Heart right ventricle (tissue), 16 donors: ENCODE measurements at regions of chr1 and their contacts with region 1.

Region 1: DNA sequence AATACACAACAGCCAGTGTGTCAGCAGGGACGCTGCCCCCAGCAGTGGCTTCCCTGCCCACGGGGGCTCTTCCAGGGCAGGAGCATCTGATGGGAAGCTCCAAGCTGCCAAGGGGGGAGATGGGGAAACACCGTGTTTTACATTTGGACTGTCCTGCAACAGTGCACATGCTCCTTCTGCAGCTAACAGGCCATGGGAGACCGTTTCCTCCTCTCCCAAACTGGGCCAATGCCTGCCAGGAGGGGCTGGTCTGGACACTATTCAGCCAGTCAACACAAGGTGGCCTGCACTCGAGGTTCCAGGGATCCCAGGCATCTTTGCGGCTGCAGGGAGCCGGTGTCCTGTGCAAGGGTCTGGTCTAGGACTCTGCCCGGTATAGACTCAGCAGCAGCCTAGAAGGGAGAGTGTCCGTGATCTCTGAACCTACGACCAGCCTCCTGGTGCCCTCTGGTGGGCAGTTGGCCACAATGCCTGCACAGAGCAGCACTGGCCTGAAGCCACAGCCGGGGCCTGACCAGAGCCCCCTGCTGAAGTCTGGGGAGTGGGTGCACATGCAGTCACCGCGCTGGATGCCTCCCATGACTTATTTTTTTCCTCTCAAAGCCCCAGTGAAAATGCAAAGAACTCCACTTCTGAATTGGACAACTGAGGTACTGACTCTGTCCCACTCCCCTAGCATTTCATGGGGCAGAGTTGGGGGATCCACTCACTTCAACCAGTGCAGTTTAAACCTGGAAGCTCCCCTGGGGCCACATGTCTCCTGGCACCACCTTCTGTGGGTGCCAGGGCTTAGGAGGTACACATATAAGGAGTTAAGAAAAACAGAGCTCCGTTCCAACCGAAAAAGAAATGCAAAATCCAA is 33.3 kb downstream of the RCC2 start:
- DNase-seq: peak; percentile 39 to 50
- ATAC-seq: peak in 7 of 8 donors; percentile 82 to 90 (median 87)
- H3K4me3 ChIP-seq: no peak overlapping the region
- H3K27ac ChIP-seq: no peak overlapping the region
- H3K4me1 ChIP-seq: peaks cover 0 to 10% (median 0%) of the 10 kb centered on the region in 9 donors
- H3K27me3 ChIP-seq: peaks cover 0 to 5% (median 0%) of the 10 kb centered on the region in 7 donors
- CTCF ChIP-seq: peak; percentile 46 to 81 (median 72)

Region 2: DNA sequence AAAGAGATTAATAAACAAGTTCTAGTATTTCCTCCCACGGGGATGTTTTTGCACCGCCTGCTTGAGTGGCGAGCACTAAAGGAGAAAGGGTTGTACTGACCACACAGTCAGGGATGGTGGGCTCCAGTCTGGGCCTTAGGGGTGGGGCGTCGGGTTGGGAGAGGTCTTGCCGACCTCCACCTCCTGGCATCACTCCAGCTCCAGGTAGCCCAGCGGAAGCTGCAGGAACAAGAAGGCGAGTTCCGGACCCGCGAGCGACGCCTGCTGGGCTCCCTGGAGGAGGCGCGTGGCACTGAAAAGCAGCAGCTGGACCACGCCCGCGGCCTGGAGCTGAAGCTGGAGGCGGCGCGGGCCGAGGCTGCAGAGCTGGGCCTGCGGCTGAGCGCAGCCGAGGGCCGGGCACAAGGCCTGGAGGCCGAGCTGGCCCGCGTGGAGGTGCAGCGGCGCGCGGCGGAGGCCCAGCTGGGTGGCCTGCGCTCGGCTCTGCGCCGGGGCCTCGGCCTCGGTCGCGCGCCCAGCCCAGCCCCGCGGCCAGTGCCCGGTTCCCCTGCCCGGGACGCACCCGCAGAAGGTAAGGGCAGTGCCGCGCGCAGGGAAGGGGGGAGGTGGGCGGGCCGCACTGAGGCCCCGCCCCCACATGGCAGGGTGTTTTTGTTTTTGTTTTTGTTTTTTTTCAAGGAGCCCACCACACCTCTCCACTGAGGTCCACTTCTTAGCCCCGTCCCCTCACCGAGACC is 445.4 kb before region 1 on chr1:
- intact Hi-C with region 1: no loop called
- DNase-seq: peak; percentile 72 to 81
- ATAC-seq: peak; percentile 70 to 92 (median 78)
- H3K4me3 ChIP-seq: peak overlapping the region in 8 of 10 donors; percentile 21 to 48 (median 42)
- H3K27ac ChIP-seq: peak overlapping the region in 3 of 10 donors; percentile 25 to 43 (median 34)
- H3K4me1 ChIP-seq: peaks cover 0 to 22% (median 0%) of the 10 kb centered on the region in 9 donors
- H3K27me3 ChIP-seq: no peaks in the 10 kb centered on the region
- CTCF ChIP-seq: peak; percentile 10 to 71 (median 59)

Region 3: DNA sequence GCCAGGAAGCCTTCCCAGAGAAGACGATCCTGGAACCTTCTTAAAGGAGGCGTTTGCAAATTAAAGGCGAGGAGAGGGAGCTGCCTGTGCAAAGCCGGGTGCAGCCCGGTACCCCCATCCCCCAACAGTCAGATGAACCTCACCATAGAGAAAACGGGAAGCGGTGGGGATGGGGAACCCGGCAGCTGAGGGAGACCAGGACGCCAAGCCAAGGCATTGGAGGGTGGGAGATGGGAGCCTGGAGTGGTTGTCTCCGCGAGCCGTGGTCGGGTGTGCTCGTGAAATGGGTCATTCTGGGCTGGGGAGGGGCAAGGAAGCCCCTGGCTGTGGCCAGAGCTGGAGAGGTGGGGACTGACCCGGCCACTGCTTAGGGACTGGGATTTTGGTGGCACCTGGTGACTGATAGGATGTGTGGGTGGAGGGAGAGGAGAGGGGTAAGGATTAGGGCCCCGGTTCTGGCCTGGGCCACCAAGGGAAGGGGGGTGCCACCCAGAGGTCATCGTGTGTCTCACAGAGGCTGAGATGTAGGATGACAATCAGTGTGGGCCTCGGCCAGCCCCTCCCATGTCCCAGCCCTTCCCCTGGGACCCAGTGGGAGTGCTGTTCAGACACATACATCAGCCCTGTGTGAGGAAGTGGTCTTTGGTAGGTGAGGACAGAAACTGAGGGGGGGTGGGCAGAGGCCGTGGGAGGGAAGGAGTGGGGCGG is 286.2 kb before region 1 on chr1:
- intact Hi-C with region 1: loop called in 7 of 10 experiments (anchors 5 to 10 kb)
- DNase-seq: no peak
- ATAC-seq: no peak
- H3K4me3 ChIP-seq: peak overlapping the region in 8 of 10 donors; percentile 5 to 55 (median 44)
- H3K27ac ChIP-seq: peak overlapping the region in 1 of 10 donors; percentile 61
- H3K4me1 ChIP-seq: peaks cover 0 to 39% (median 17%) of the 10 kb centered on the region in 9 donors
- H3K27me3 ChIP-seq: peaks cover 6 to 58% (median 48%) of the 10 kb centered on the region in 7 donors
- CTCF ChIP-seq: no peak

Region 4: DNA sequence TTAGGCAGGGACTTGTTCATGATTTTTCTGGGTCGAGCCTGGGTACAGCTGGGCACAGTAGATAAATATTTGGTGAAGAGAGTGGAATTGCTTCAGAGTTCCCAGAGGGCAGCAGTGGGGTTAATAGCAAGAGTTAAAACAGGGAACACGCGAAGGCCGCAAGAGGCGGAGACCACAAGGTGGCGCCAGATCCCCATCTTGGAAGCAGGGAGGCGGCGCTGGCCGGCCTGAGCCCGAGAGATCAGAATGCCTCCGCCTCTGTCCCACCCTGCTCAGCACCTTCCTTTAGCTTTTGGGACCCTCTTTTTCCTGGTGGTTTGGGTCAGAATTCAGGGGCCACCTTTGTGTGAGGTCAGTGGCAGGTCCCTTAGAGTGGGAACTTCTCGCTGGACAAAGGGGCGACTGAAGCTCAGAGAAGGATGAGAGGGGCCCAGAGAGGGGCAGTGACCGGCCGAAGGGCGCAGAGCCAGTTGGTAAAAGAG is 280.3 kb before region 1 on chr1:
- intact Hi-C with region 1: loop called in 7 of 10 experiments (anchors 5 to 10 kb)
- DNase-seq: peak; percentile 84 to 89
- ATAC-seq: peak; percentile 77 to 88 (median 83)
- H3K4me3 ChIP-seq: no peak overlapping the region
- H3K27ac ChIP-seq: no peak overlapping the region
- H3K4me1 ChIP-seq: peaks cover 0 to 43% (median 5%) of the 10 kb centered on the region in 9 donors
- H3K27me3 ChIP-seq: peaks cover 0 to 16% (median 2%) of the 10 kb centered on the region in 7 donors
- CTCF ChIP-seq: peak; percentile 85 to 98 (median 92)

Region 5: DNA sequence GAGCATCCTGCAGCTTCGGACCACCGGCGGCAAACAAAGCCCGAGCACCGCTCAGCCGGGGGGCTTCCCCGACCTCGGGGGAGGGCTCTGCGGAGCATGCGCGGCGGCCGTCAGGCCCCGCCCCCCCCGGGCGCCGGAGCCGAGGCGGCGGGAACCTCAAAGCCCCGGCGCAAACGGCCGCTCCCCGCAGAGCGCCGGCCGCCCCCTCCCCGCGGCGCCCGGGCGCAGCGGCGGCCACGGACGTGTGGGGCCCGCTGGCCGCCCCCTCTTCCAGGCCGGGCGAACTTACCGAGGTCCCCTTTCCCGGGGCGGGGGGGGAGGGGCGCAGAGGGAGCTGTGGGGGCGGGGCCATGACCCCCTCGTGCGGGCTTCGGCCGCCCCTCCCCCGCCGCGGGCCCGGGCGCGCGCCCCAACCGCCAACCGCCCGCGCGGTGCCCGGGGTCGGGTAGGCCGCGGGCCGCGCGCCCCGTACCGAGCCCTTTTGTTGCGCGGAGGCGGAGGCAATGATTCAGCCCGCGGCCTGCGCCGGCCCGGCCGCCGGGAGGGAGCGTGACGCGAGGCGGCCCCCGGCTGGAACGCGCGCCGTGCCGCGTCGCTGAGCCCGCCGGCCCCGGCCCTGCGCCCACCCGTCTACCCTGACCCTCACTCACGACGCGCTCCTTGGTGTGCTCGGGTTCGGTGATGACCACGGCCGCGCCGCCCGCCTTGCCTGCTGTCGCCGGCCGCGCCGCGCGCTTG is 31.6 kb after region 1 on chr1:
- intact Hi-C with region 1: no loop called
- DNase-seq: peak; percentile 21 to 47
- ATAC-seq: peak; percentile 54 to 72 (median 58)
- H3K4me3 ChIP-seq: peak overlapping the region; percentile 51 to 92 (median 79)
- H3K27ac ChIP-seq: peak overlapping the region; percentile 65 to 94 (median 82)
- H3K4me1 ChIP-seq: peaks cover 0 to 38% (median 21%) of the 10 kb centered on the region in 9 donors
- H3K27me3 ChIP-seq: no peaks in the 10 kb centered on the region
- CTCF ChIP-seq: no peak